Panc1 (cell line): ENCODE measurements at regions of chr17 and their contacts with region 1.

Region 1: DNA sequence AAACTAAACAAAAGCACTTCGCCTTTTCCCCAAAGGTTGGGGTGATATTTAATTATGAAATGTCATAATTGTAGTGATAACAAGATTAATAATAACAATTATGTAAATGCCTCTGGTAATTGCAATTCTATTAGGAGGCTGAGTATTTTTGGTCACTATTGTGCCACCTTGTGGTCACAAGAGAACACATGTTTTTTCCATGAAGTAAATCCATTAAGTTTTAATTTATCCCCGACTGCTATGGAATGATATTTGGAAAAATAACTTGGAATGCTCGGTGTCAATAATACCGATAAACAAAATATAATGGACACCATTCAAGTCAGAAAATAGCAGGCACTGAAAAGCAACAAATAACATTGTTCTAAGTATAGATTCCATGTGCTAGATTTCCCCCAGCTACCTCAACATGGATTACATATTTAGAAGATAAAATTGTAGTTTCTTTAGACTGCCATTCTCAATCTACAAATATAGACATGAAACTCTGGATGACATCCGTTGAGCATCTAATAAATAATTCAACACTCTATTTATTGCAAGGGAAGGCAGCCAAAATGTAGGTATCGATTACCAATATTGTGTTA is 25.0 kb upstream of the KCNJ2 start:
- DNase-seq: no peak
- ATAC-seq: no peak
- H3K4me3 ChIP-seq: no peak overlapping the region
- H3K27ac ChIP-seq: no peak overlapping the region
- H3K4me1 ChIP-seq: no peaks in the 10 kb centered on the region
- H3K27me3 ChIP-seq: no peaks in the 10 kb centered on the region
- CTCF ChIP-seq: peak; percentile 68; the same call in 1 of the 2 replicates

Region 2: DNA sequence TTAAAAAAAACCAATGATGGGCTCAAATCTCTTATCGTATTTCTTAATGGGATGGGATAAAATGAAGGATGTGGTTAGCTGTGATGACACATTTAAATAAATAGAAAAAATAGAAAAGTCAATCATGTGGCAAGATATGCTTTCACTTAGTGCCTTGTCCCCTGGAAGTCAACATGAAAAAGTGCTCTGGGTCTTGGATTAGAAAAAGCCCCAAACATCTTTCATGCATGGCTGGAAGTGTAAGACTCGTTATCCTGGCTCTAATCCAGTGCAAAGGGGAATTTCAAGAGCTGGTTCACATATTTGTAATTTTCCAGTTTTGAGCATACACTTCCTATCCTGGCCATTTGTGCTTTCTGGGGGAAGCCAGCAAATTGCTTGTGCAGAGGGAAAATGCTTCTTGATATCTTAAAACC is 569.0 kb before region 1 on chr17:
- CTCF ChIA-PET with region 1: no interaction called
- POLR2A ChIA-PET with region 1: no interaction called
- in situ Hi-C with region 1: no loop called
- intact Hi-C with region 1: loop called (anchors 5 kb)
- DNase-seq: no peak
- ATAC-seq: peak; percentile 65
- H3K4me3 ChIP-seq: no peak overlapping the region
- H3K27ac ChIP-seq: no peak overlapping the region
- H3K4me1 ChIP-seq: peaks cover 6% of the 10 kb centered on the region; the same call in 1 of the 2 replicates
- H3K27me3 ChIP-seq: no peaks in the 10 kb centered on the region
- CTCF ChIP-seq: no peak

Region 3: DNA sequence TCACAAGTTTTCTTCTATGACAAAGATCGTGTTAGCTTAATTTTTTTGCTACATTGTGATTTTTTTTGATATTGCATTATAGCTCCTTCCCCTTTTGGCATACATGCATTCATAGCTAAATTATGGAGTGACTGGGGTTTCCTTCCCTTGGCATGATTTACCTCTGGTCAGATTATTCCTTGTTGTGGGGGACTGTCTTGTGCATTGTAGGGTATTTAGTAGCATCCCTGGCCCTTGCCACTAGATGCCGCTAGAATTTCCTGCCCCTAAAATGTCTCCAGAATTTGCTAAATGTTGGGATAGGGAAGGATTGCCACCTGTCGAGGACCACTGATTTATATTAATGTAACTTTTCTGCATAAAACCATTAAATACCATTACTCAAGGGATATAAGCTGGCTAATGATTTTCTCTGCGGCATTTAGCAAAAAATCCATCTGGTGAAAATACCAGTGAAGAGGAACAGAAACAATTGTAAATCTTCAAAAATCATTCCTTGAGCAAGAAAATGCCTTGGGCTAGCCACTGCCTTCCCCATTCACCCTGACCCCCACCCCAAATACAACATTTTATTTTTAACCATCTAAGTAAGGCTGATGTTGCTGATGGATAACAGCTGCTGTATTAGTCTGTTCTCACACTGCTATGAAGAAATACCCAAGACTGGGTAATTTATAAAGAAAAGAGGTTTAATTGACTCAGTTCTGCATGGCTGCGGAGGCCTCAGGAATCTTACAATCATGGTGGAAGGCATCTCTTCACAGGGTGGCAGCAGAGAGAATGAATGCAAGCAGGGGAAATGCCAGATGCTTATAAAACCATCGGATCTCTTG is 534.7 kb before region 1 on chr17:
- CTCF ChIA-PET with region 1: no interaction called
- POLR2A ChIA-PET with region 1: interaction called, 5 read pairs
- in situ Hi-C with region 1: no loop called
- intact Hi-C with region 1: loop called (anchors 1 kb)
- DNase-seq: no peak
- ATAC-seq: no peak; the same call in 1 of the 2 replicates
- H3K4me3 ChIP-seq: no peak overlapping the region
- H3K27ac ChIP-seq: no peak overlapping the region
- H3K4me1 ChIP-seq: peaks cover 3% of the 10 kb centered on the region; the same call in 1 of the 2 replicates
- H3K27me3 ChIP-seq: no peaks in the 10 kb centered on the region
- CTCF ChIP-seq: peak; percentile 90